ENCODE measurements at regions of chr10 and their contacts with region 1.

Region 1: DNA sequence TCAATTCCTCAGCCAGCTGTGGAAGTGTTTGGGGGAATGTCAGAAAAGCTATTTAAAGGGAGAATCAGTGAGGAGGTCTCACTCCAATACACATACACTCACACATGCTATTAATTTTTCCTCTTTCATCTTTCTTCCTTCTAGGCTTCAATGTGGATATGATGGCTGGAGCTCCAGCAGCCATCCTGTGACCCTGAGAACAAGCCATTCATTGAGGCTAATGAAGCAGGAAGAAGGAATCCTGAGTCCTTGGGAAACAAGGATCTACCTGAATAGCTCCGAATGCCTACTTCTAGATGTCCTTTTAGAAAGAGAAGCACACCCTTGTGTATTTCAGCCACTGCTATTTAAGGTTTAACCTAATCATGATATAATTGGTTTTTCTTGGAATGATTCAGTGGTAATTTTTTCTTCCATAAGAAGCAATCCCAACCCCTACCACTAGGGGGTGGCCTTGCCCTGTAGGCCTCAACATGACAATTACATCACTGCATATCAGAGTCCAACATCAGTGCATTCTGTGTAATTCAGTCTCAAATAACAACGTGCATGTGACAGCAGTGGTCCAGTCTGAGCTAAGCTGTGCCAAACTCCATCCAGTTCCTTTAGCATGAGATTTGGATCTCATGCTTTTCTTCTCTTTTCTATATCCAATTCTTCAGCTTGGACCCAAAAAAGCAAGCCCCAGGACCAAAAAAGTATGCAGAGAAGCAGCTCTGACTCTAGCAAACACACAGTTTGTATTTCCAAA is 85.3 kb upstream of the ANKRD1 start:
- DNase-seq: peak; percentile 80
- ATAC-seq: peak; percentile 80
- H3K4me3 ChIP-seq: peak overlapping the region; percentile 29; the same call in 1 of the 2 replicates
- H3K27ac ChIP-seq: peak overlapping the region; percentile 71
- H3K4me1 ChIP-seq: peaks cover 46% of the 10 kb centered on the region
- H3K27me3 ChIP-seq: no peaks in the 10 kb centered on the region
- CTCF ChIP-seq: peak; percentile 89 to 97 (median 93)
- EP300 ChIP-seq: 0 out of 4 replicates have a peak, but pooled peaks of 1 of the 2 experiments have one; percentile 20
- POLR2A ChIP-seq: no peak
- RAD21 ChIP-seq: peak; percentile 96

Region 2: GRCh38 chr10:90847417-90847816 is 158.8 kb before region 1 on chr10:
- CTCF ChIA-PET with region 1: no interaction called
- POLR2A ChIA-PET with region 1: no interaction called
- RAD21 ChIA-PET with region 1: no interaction called
- SMC1A ChIA-PET with region 1: no interaction called
- in situ Hi-C with region 1: no loop called
- intact Hi-C with region 1: no loop called
- DNase-seq: no peak
- ATAC-seq: peak; percentile 63
- H3K4me3 ChIP-seq: no peak overlapping the region
- H3K27ac ChIP-seq: no peak overlapping the region
- H3K4me1 ChIP-seq: no peaks in the 10 kb centered on the region
- H3K27me3 ChIP-seq: peaks cover 0 to 2% of the 10 kb centered on the region in 2 experiments; a peak in 1 of 4 replicates
- CTCF ChIP-seq: no peak
- EP300 ChIP-seq: no peak
- POLR2A ChIP-seq: no peak
- RAD21 ChIP-seq: no peak

Region 3: DNA sequence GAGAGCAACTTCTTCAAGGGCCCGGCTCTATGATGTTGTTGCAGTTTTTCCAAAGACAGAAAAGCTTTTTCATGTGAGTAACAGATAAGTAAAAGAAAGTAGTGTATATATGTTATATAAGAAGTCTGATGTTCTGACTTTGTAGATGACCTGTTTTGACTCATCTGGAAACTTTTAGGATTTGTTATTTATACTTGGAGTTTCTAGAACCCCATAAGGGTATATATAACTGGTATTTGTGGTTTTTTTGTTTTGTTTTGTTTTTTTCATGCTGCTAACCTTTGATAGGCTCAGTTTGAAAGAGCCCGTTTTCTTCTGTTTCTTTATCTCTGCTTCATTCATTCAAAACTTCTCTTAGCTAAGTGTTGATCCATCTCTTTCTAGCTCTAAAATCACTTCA is 127.1 kb before region 1 on chr10:
- CTCF ChIA-PET with region 1: interaction called, 10 read pairs
- POLR2A ChIA-PET with region 1: no interaction called
- RAD21 ChIA-PET with region 1: interaction called, 4 read pairs
- SMC1A ChIA-PET with region 1: interaction called, 4 read pairs
- in situ Hi-C with region 1: no loop called
- intact Hi-C with region 1: no loop called
- DNase-seq: no peak
- ATAC-seq: no peak
- H3K4me3 ChIP-seq: no peak overlapping the region
- H3K27ac ChIP-seq: no peak overlapping the region
- H3K4me1 ChIP-seq: 0 out of 2 replicates have a peak, but pooled peaks cover 7% of the 10 kb centered on the region
- H3K27me3 ChIP-seq: no peaks in the 10 kb centered on the region
- CTCF ChIP-seq: no peak
- EP300 ChIP-seq: no peak
- POLR2A ChIP-seq: no peak
- RAD21 ChIP-seq: no peak

Region 4: DNA sequence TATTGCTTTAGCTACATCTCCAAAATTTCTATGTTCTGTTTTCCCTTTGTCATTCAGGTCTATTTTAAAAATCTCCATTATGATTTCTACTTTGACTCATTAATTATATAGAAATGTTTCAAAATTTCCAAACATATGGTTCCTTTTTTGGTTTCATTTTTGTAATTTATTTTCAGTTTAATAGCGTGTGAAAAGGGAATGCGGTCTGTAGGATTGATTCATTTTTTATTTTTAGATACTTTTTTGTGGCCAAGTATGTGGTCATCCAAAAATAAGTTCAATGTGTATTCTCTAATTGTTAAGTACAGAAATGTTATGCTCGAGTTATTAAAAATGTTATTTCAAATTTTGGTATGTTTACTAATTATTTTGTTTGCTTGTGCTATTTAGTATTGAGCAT is 12.8 kb before region 1 on chr10:
- CTCF ChIA-PET with region 1: interaction called, 36 read pairs
- POLR2A ChIA-PET with region 1: interaction called, 4 read pairs
- RAD21 ChIA-PET with region 1: interaction called, 47 read pairs
- SMC1A ChIA-PET with region 1: interaction called, 74 read pairs
- in situ Hi-C with region 1: no loop called
- intact Hi-C with region 1: no loop called
- DNase-seq: no peak
- ATAC-seq: peak; percentile 50
- H3K4me3 ChIP-seq: peak overlapping the region; percentile 66
- H3K27ac ChIP-seq: peak overlapping the region; percentile 88
- H3K4me1 ChIP-seq: peaks cover 20% of the 10 kb centered on the region
- H3K27me3 ChIP-seq: no peaks in the 10 kb centered on the region
- CTCF ChIP-seq: no peak
- EP300 ChIP-seq: peak; percentile 41 to 86; a peak in 2 of 4 replicates
- POLR2A ChIP-seq: no peak
- RAD21 ChIP-seq: no peak

Region 5: GRCh38 chr10:91088300-91089140 is 82.3 kb after region 1 on chr10:
- CTCF ChIA-PET with region 1: interaction called, 38 read pairs
- POLR2A ChIA-PET with region 1: no interaction called
- RAD21 ChIA-PET with region 1: interaction called, 15 read pairs
- SMC1A ChIA-PET with region 1: interaction called, 22 read pairs
- in situ Hi-C with region 1: no loop called
- intact Hi-C with region 1: loop called (anchors 5 kb)
- DNase-seq: no peak
- ATAC-seq: peak; percentile 64
- H3K4me3 ChIP-seq: no peak overlapping the region
- H3K27ac ChIP-seq: no peak overlapping the region
- H3K4me1 ChIP-seq: no peaks in the 10 kb centered on the region
- H3K27me3 ChIP-seq: no peaks in the 10 kb centered on the region
- CTCF ChIP-seq: peak in 2 of 3 experiments; percentile 25 to 37; a peak in 3 of 6 replicates
- EP300 ChIP-seq: no peak
- POLR2A ChIP-seq: no peak
- RAD21 ChIP-seq: peak; percentile 75

Region 6: DNA sequence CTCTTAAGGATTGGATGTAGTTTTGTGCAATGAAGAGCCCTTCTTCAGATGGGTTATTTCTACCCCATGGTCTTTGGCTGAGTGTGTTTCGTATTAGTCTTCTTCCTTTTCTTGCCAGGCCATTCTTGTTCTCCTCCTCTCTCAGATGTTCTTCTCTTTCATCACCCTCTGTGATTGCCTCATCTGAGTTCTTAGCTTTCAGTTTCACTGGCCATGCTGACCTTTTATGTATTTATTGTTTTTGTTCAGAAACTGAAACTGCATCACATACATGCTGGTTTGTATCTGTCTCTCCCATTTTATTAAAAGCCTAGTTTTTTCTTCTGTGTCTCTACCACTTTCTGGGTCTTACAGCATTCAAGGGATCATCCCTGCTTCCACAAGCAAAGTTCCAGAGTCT is 192.6 kb after region 1 on chr10:
- CTCF ChIA-PET with region 1: interaction called, 3 read pairs
- POLR2A ChIA-PET with region 1: interaction called, 3 read pairs
- RAD21 ChIA-PET with region 1: interaction called, 29 read pairs
- SMC1A ChIA-PET with region 1: interaction called, 21 read pairs
- in situ Hi-C with region 1: no loop called
- intact Hi-C with region 1: no loop called
- DNase-seq: peak; percentile 68
- ATAC-seq: peak; percentile 70
- H3K4me3 ChIP-seq: peak overlapping the region; percentile 53
- H3K27ac ChIP-seq: peak overlapping the region; percentile 61
- H3K4me1 ChIP-seq: peaks cover 47% of the 10 kb centered on the region
- H3K27me3 ChIP-seq: no peaks in the 10 kb centered on the region
- CTCF ChIP-seq: no peak
- EP300 ChIP-seq: peak in 1 of 2 experiments; percentile 15; a peak in 1 of 4 replicates
- POLR2A ChIP-seq: no peak
- RAD21 ChIP-seq: no peak

Region 7: DNA sequence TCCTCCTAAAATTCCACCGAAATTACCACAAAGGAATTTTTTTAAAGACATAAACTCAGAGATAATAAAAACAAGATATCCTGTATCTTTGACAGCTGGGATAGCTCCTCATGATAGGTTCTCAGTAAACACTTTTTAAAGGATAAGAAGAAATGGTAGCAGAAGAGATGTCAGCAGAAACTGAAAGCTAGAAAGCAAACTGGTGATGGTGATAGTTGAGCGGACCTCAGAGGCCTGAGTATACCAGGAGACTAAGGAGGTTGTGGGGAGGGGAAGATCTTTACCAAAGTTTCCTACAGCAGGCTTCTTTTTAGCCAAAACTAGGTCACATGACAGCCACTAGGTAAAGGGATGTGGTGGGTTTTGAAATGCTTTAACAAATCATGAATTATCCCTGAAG is 236.8 kb after region 1 on chr10:
- CTCF ChIA-PET with region 1: interaction called, 289 read pairs
- POLR2A ChIA-PET with region 1: no interaction called
- RAD21 ChIA-PET with region 1: interaction called, 203 read pairs
- SMC1A ChIA-PET with region 1: interaction called, 296 read pairs
- in situ Hi-C with region 1: loop called (anchors 10 kb)
- intact Hi-C with region 1: no loop called
- DNase-seq: no peak
- ATAC-seq: peak; percentile 75
- H3K4me3 ChIP-seq: no peak overlapping the region
- H3K27ac ChIP-seq: no peak overlapping the region
- H3K4me1 ChIP-seq: peaks cover 19% of the 10 kb centered on the region
- H3K27me3 ChIP-seq: no peaks in the 10 kb centered on the region
- CTCF ChIP-seq: no peak
- EP300 ChIP-seq: no peak
- POLR2A ChIP-seq: no peak
- RAD21 ChIP-seq: no peak

Measured in GM12878 (cell line).